H1 (cell line): ENCODE measurements at regions of chr17 and their contacts with region 1.

Region 1: GRCh38 chr17:11144358-11145233 is 96.4 kb upstream of the SHISA6 start:
- DNase-seq: peak; percentile 33 to 49
- H3K4me3 ChIP-seq: no peak overlapping the region
- H3K27ac ChIP-seq: no peak overlapping the region
- H3K4me1 ChIP-seq: no peaks in the 10 kb centered on the region
- H3K27me3 ChIP-seq: no peaks in the 10 kb centered on the region; a peak in 1 of 7 replicates
- CTCF ChIP-seq: peak; percentile 35 to 80 (median 78)
- EP300 ChIP-seq: no peak
- POLR2A ChIP-seq: no peak
- RAD21 ChIP-seq: peak; percentile 97

Region 2: GRCh38 chr17:10875979-10876555 is 268.5 kb before region 1 on chr17:
- CTCF ChIA-PET with region 1: interaction called, 353 read pairs
- POLR2A ChIA-PET with region 1: no interaction called
- DNase-seq: peak in 1 of 2 experiments; percentile 88
- H3K4me3 ChIP-seq: no peak overlapping the region
- H3K27ac ChIP-seq: no peak overlapping the region
- H3K4me1 ChIP-seq: no peaks in the 10 kb centered on the region
- H3K27me3 ChIP-seq: no peaks in the 10 kb centered on the region
- CTCF ChIP-seq: peak; percentile 74 to 83 (median 75)
- EP300 ChIP-seq: no peak
- POLR2A ChIP-seq: no peak
- RAD21 ChIP-seq: peak; percentile 91 to 96

Region 3: GRCh38 chr17:10888858-10889257 is 255.7 kb before region 1 on chr17:
- CTCF ChIA-PET with region 1: interaction called, 353 read pairs
- POLR2A ChIA-PET with region 1: no interaction called
- DNase-seq: no peak
- H3K4me3 ChIP-seq: no peak overlapping the region
- H3K27ac ChIP-seq: no peak overlapping the region
- H3K4me1 ChIP-seq: no peaks in the 10 kb centered on the region
- H3K27me3 ChIP-seq: no peaks in the 10 kb centered on the region
- CTCF ChIP-seq: no peak
- EP300 ChIP-seq: no peak
- POLR2A ChIP-seq: no peak
- RAD21 ChIP-seq: no peak

Region 4: DNA sequence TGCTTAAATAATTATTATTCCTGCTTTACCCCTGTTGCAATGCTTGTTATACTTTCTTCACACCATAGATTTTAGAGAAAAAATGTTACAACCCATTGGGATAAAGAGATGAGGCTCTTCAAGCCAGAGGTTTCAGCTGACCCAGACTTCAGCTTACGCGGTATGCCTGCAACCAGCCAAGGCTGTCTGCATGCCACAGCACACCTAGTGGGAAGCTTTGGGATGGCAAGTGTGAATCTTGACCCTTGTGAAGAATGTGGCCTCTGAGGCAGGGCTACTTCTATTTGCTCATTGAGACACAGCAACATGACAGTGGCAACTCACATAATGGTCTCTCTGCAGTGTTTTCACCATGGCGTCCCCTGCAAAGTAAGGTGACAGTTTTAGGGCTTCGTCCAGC is 112.8 kb before region 1 on chr17:
- CTCF ChIA-PET with region 1: interaction called, 15 read pairs
- POLR2A ChIA-PET with region 1: no interaction called
- DNase-seq: peak; percentile 17 to 72
- H3K4me3 ChIP-seq: no peak overlapping the region
- H3K27ac ChIP-seq: no peak overlapping the region
- H3K4me1 ChIP-seq: peaks cover 0 to 6% (median 0%) of the 10 kb centered on the region in 4 experiments; a peak in 1 of 7 replicates
- H3K27me3 ChIP-seq: no peaks in the 10 kb centered on the region
- CTCF ChIP-seq: peak; percentile 58 to 94 (median 81)
- EP300 ChIP-seq: no peak
- POLR2A ChIP-seq: no peak
- RAD21 ChIP-seq: peak; percentile 64 to 73

Region 5: DNA sequence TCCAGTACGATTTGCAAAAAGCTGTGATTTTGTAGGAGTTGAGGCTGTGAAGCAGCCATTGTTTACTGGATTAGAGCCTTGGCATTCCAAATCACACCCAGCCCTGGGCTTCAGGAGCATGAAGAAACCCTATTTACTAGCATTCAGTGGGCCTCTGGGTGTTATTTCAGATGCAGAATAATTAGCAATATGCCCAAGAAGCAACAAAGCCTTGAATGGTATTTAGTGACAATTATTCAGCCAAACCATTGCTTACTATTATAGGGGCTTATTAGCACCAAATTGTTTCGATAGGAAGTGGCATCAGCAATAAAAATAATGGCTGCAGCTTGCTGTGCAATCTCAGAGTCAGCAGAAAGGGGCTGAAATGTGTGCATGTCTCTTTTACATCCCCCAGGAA is 70.1 kb before region 1 on chr17:
- CTCF ChIA-PET with region 1: no interaction called
- POLR2A ChIA-PET with region 1: no interaction called
- DNase-seq: no peak
- H3K4me3 ChIP-seq: no peak overlapping the region
- H3K27ac ChIP-seq: no peak overlapping the region
- H3K4me1 ChIP-seq: peaks cover 0 to 2% (median 0%) of the 10 kb centered on the region in 4 experiments; a peak in 2 of 7 replicates
- H3K27me3 ChIP-seq: no peaks in the 10 kb centered on the region
- CTCF ChIP-seq: no peak
- EP300 ChIP-seq: no peak
- POLR2A ChIP-seq: no peak
- RAD21 ChIP-seq: no peak

Region 6: DNA sequence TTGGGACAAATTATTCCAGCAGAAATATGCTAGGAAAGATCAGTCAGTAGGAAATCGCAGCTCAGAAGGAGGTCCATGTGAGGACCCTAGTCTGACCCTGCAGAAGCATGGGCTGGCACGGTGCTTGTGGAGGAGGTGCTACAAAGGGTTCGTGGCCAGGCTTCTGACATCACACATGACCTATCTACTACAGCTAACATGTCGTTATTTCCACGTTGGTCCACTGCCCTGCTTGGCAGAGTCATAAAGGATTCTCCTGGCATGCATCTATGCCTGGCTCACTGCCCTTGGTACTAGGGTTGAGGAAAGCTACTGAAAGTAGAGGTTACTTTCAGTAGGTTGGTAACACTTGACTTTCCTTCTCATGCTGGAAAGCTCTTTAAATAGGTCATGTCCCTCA is 21.7 kb before region 1 on chr17:
- CTCF ChIA-PET with region 1: interaction called, 14 read pairs
- POLR2A ChIA-PET with region 1: no interaction called
- DNase-seq: no peak
- H3K4me3 ChIP-seq: no peak overlapping the region
- H3K27ac ChIP-seq: no peak overlapping the region
- H3K4me1 ChIP-seq: no peaks in the 10 kb centered on the region
- H3K27me3 ChIP-seq: no peaks in the 10 kb centered on the region
- CTCF ChIP-seq: no peak
- EP300 ChIP-seq: no peak
- POLR2A ChIP-seq: no peak
- RAD21 ChIP-seq: no peak

Region 7: GRCh38 chr17:11170881-11171280 is 26.3 kb after region 1 on chr17:
- CTCF ChIA-PET with region 1: interaction called, 16 read pairs
- POLR2A ChIA-PET with region 1: no interaction called
- DNase-seq: no peak
- H3K4me3 ChIP-seq: no peak overlapping the region
- H3K27ac ChIP-seq: no peak overlapping the region
- H3K4me1 ChIP-seq: peaks cover 0 to 6% (median 0%) of the 10 kb centered on the region in 4 experiments; a peak in 3 of 7 replicates
- H3K27me3 ChIP-seq: peaks cover 0 to 1% (median 0%) of the 10 kb centered on the region in 4 experiments; a peak in 1 of 7 replicates
- CTCF ChIP-seq: no peak
- EP300 ChIP-seq: no peak
- POLR2A ChIP-seq: no peak
- RAD21 ChIP-seq: no peak